ENCODE measurements at regions of chr1 and their contacts with region 1.

Region 1: GRCh38 chr1:220272047-220272840 is at the start of gene RAB3GAP2:
- DNase-seq: peak; percentile 93
- H3K4me3 ChIP-seq: peak within 1 kb of the TSS; percentile 76 to 99 (median 94)
- H3K27ac ChIP-seq: peak within 1 kb of the TSS; percentile 89
- H3K4me1 ChIP-seq: peaks cover 12% of the 10 kb centered on the region
- H3K27me3 ChIP-seq: no peaks in the 10 kb centered on the region
- CTCF ChIP-seq: no peak
- total RNA-seq, gene RAB3GAP2: 46.3 to 55.3 TPM

Region 2: DNA sequence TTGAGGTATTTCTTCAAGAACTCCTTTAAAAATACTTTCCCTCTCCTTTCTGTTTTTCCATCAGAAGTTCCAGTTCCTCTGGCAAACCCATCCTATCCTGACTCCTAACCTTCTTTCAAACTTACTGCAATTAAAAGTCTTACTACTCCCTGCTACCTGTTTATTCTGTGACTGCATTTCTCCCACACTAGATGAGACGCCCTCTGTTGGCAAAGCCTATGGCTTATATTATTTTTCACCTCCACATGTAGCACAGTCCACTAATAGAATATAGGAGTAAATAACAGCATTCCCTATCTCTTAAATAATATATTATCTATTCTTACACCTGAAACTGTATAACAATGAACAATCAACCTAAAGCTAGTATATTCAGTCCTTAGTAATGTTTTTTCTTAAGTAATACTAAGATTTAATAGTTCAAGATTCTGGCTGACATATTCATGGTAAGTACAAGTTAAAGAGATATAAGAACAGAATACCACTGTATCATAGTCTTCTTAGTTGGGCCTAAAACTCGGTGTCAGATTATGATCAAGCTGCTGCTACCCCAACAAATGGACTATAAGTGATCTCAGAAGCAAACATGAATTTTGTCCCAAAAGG is 54.8 kb before region 1 on chr1:
- CTCF ChIA-PET with region 1: no interaction called
- dilution Hi-C with region 1: no loop called
- in situ Hi-C with region 1: no loop called
- intact Hi-C with region 1: loop called (anchors 1 kb)
- DNase-seq: no peak
- H3K4me3 ChIP-seq: no peak overlapping the region
- H3K27ac ChIP-seq: no peak overlapping the region
- H3K4me1 ChIP-seq: peaks cover 6% of the 10 kb centered on the region
- H3K27me3 ChIP-seq: no peaks in the 10 kb centered on the region
- CTCF ChIP-seq: peak; percentile 38 to 59

Region 3: DNA sequence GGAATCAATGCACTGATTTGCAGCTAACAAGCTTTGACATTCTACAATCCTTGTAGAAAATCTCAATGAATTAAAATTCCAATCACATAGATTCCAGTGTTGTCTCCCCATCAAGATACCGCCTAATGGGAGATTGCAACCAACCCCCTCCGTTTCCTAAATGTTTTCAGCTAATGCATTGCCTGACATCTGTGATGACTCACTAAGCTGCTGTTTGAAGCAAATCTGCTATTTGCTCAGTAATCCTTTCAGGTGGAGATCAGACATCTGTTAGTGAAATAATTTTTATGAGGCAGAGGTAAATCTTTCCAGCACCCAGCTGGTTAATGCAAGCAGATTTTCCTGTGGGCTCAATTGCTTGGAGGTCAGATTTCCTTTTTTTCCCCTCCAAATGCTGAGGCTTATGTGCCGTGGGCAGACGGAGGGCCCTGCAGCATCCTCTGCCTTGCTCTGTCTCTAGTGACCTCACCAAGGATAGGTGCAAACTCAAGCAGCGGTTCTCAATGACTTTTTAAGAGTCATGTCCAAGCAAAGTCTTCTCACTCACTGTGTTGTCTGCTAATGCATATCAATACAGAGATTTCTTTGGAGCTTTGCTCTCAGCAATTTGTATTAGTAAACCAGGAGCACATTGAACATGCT is 91.1 kb after region 1 on chr1:
- CTCF ChIA-PET with region 1: no interaction called
- dilution Hi-C with region 1: no loop called
- in situ Hi-C with region 1: no loop called
- intact Hi-C with region 1: no loop called
- DNase-seq: no peak
- H3K4me3 ChIP-seq: no peak overlapping the region
- H3K27ac ChIP-seq: no peak overlapping the region
- H3K4me1 ChIP-seq: peaks cover 5% of the 10 kb centered on the region
- H3K27me3 ChIP-seq: no peaks in the 10 kb centered on the region
- CTCF ChIP-seq: no peak